ENCODE measurements at regions of chr10 and their contacts with region 1.

Region 1: DNA sequence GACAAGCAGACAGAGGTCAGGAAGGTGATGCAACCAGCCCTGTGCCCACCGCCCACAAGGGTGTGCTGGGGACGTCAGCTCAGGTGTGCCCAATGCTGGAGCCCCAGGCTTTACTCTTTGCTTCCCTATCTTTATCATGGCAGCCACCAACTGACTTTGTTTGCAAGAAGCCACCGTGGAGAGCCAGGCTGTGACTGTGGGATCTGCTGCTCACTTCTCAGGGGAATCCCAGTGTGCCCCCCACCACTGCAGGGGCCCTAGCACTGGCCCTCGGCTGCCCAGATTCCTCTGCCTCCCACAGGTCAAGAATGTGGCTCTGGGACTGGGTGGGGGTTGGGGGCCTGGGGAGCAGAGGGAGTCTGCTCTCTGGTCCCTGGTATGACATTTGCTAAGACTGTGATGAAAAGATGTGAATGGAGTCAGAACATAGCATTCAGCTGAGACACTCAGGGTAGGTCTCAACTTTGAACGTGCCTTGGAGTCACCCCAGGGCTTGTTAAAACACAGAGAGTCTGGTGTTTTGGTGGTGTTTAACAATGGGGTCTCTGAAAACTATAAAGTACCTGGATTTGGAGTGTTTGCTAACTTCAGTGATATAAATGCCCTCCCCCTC is 47.3 kb downstream of the ARHGAP22 start:
- DNase-seq: no peak
- ATAC-seq: no peak
- H3K4me3 ChIP-seq: no peak overlapping the region
- H3K27ac ChIP-seq: no peak overlapping the region
- H3K4me1 ChIP-seq: no peaks in the 10 kb centered on the region
- H3K27me3 ChIP-seq: no peaks in the 10 kb centered on the region; a peak in 1 of 4 replicates
- CTCF ChIP-seq: no peak
- EP300 ChIP-seq: no peak
- POLR2A ChIP-seq: no peak
- RAD21 ChIP-seq: no peak

Region 2: DNA sequence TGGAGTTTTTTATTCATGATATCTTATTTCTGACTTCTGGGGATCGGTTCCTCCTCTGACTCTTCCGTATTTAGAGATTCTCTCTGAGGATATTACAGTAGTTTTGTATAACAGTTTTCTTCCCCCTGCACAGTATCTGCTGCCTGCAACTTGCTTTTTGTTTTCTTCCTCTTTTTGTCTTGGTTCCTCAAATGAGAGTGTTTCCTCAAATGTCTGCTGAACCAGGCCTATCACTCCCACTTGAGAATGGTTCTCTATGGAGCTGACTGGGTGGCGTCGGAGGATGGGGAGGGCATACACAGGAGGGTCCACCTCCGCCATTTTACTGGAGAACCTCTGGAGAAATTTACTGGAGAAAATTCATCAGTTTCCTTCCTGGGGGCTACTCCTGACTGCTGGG is 19.5 kb after region 1 on chr10:
- CTCF ChIA-PET with region 1: interaction called, 4 read pairs
- POLR2A ChIA-PET with region 1: no interaction called
- RAD21 ChIA-PET with region 1: interaction called, 3 read pairs
- SMC1A ChIA-PET with region 1: interaction called, 25 read pairs
- in situ Hi-C with region 1: no loop called
- intact Hi-C with region 1: no loop called
- DNase-seq: no peak
- ATAC-seq: peak; percentile 68
- H3K4me3 ChIP-seq: no peak overlapping the region
- H3K27ac ChIP-seq: peak overlapping the region; percentile 43; the same call in 1 of the 2 replicates
- H3K4me1 ChIP-seq: peaks cover 34% of the 10 kb centered on the region
- H3K27me3 ChIP-seq: no peaks in the 10 kb centered on the region
- CTCF ChIP-seq: no peak
- EP300 ChIP-seq: no peak
- POLR2A ChIP-seq: no peak
- RAD21 ChIP-seq: no peak

Measured in GM12878 (cell line).